Dorsolateral prefrontal cortex (tissue), 120 donors: ENCODE measurements at regions of chr3 and their contacts with region 1.

Region 1: DNA sequence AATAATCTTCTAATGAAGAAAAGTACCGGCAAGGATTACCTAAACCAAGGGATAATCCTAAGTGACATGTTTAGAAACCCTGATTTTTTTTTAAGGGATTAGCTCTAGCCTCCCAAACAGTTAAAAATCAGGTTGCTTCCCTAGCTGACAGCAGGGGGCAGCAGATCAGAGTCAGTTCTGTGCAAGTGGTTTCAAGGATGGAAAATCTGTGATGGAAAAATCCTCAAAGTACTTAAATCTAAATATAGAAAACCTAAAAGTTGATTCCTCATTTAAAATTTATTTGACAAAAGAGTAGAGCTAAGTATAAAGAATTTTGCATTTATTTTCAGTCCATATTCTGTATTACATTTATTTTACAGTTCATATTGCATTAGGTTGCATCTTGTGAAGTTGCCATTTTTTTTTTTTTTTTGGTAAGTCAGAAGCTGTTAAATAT is 107.6 kb downstream of the PEX5L start:
- DNase-seq: peak in 9 of 10 donors; percentile 31 to 82 (median 62)
- H3K4me3 ChIP-seq: no peak overlapping the region
- H3K27ac ChIP-seq: peak overlapping the region in 56 of 59 donors; percentile 2 to 87 (median 71)
- H3K27me3 ChIP-seq: no peaks in the 10 kb centered on the region
- CTCF ChIP-seq: peak; percentile 72 to 95 (median 87)

Region 2: DNA sequence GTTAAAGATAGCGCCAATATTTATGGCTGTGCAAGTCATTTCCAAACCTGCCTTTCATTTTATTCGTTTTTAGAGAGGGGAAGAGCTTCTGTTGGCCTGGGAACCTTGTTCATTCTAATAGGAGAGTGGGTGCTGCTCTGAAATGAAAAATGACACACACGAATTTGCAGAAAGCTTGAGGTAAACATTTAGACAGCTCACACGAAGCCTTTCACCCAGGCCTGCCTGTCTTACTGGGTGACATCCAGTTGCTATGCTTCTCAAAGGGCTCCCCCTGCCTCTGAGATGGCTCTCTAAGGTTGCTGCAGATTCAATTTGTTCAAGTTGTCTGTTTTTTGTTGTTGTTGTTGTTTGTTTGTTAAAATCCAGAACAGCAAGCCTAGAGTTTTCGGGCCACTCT is 89.4 kb after region 1 on chr3:
- intact Hi-C with region 1: loop called in 1 of 2 experiments (anchors 5 kb)
- DNase-seq: peak in 8 of 10 donors; percentile 38 to 78 (median 57)
- H3K4me3 ChIP-seq: peak overlapping the region in 10 of 59 donors; percentile 0 to 31 (median 12)
- H3K27ac ChIP-seq: peak overlapping the region in 56 of 59 donors; percentile 12 to 90 (median 76)
- H3K27me3 ChIP-seq: no peaks in the 10 kb centered on the region
- CTCF ChIP-seq: peak in 55 of 56 donors; percentile 22 to 82 (median 55)

Region 3: DNA sequence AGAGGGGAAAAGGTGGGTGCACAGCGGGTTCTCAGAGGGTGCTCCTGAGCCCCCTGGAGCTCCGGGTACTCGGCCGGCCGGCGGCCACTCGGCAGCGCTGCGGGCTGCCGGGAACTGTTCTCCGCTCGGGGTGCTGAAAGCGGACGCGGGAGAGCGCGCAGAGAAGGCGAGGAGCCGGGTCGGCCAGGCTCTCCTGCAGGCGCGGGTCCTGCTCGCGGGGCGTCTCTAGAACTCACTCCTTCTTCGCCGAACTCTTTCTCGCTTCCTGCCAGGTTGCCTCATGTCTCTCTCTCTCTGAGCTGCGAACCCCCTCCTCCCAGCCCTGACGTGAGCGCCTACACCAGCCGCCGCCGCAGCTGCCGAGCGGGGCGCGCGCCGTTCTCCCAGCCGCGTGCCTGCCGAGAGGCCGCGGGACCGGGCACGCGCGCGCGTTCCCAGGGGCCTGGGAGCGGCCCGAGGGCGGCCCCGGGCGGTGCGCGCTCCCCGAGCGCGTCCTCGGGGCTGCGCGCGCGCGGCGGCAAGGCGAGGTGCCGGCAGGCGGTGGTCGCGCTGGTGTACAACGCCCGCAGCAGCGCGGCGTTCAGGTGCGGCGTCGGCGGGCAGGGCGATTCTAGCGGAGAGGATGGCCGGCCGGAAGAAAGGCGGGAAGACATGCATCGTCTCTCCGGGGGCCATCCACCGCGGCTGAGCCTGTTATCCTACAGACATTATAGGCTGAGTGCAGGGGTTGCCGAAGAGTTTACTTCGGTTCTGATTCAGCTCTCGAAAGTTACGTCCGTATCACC is 107.8 kb after region 1 on chr3 and contains the start of gene PEX5L:
- intact Hi-C with region 1: loop called (anchors 5 kb)
- DNase-seq: peak; percentile 23 to 84 (median 71)
- H3K4me3 ChIP-seq: peak within 1 kb of the TSS; percentile 45 to 93 (median 71)
- H3K27ac ChIP-seq: peak within 1 kb of the TSS in 57 of 59 donors; percentile 23 to 89 (median 73)
- H3K27me3 ChIP-seq: peaks cover 0 to 6% (median 0%) of the 10 kb centered on the region in 45 donors
- CTCF ChIP-seq: peak in 25 of 56 donors; percentile 5 to 49 (median 22)
- total RNA-seq, gene PEX5L: 144 to 392 (median 245) TPM

Region 4: DNA sequence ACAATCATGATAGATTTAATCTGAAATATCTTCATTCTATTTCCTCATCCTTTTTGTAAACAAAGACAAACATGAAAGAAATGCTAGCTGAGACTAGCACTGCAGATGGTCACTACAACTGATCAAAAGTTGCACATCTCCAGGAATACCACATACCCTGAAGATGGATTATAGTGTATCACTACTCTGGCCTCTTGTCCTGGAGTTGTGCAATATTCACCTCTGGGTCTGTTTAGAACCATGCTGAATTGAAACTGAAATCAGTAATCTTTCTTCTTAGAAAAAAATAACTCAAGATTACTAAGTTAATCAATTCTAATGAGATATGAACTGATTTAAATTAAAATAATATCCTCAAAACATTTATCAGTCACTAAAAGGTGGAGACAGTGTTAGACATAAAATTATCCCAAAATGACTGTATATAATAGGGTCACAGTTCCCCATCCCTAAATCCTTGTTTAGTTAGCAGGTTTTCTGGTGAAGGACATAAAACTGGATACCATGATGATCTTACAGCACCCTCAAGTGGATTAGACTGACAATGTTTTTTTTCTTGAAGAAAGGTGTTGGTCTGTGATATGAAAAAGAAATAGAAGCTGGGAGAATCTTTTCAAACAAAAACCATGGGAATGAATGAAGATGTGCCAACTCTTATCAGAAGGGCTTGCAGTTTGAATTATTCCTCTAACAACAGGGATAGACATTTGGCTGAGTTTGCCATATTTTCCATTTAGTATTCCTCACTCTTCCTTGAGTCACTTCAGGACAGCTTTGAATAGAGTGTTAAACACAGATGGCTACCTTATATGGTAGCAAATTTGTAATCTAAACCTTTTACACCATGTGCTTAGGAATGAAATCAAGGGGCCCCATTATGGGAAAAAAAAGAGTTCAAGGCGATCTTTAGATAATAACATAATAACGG is 665.8 kb after region 1 on chr3:
- intact Hi-C with region 1: loop called (anchors 10 kb)
- DNase-seq: no peak
- H3K4me3 ChIP-seq: no peak overlapping the region
- H3K27ac ChIP-seq: no peak overlapping the region
- H3K27me3 ChIP-seq: no peaks in the 10 kb centered on the region
- CTCF ChIP-seq: peak in 55 of 56 donors; percentile 42 to 81 (median 64)

Region 5: GRCh38 chr3:180601688-180602666 is 672.9 kb after region 1 on chr3 and contains the start of gene TTC14:
- intact Hi-C with region 1: loop called (anchors 10 kb)
- DNase-seq: peak; percentile 79 to 96 (median 91)
- H3K4me3 ChIP-seq: peak within 1 kb of the TSS; percentile 72 to 98 (median 90)
- H3K27ac ChIP-seq: peak within 1 kb of the TSS in 51 of 59 donors; percentile 13 to 89 (median 63)
- H3K27me3 ChIP-seq: no peaks in the 10 kb centered on the region
- CTCF ChIP-seq: peak in 37 of 56 donors; percentile 4 to 51 (median 30)
- total RNA-seq, gene TTC14: 57.7 to 121 (median 79.4) TPM